Natural killer cell (primary cell): ENCODE measurements at regions of chr3 and their contacts with region 1.

Region 1: GRCh38 chr3:66220602-66221377 is at the start of gene SLC25A26:
- DNase-seq: peak; percentile 91 to 99
- ATAC-seq: peak; percentile 94 to 97 (median 95)
- H3K4me3 ChIP-seq: peak within 1 kb of the TSS; percentile 83
- H3K4me3 Mint-ChIP-seq: peak within 1 kb of the TSS; percentile 98
- H3K27ac ChIP-seq: peak within 1 kb of the TSS; percentile 70
- H3K27ac Mint-ChIP-seq: peak within 1 kb of the TSS; percentile 90 to 94
- H3K4me1 ChIP-seq: peaks cover 3% of the 10 kb centered on the region
- H3K4me1 Mint-ChIP-seq: peaks cover 19 to 21% of the 10 kb centered on the region in 2 donors
- H3K27me3 ChIP-seq: no peaks in the 10 kb centered on the region
- H3K27me3 Mint-ChIP-seq: peaks cover 5 to 16% of the 10 kb centered on the region in 2 donors
- CTCF ChIP-seq: no peak
- total RNA-seq, gene SLC25A26: 18.4 to 23.9 (median 23.3) TPM

Region 2: GRCh38 chr3:66372681-66373350 is 152.0 kb after region 1 on chr3:
- intact Hi-C with region 1: no loop called
- DNase-seq: peak; percentile 46 to 72
- ATAC-seq: peak; percentile 76 to 99 (median 96)
- H3K4me3 ChIP-seq: no peak overlapping the region
- H3K4me3 Mint-ChIP-seq: no peak overlapping the region
- H3K27ac ChIP-seq: no peak overlapping the region
- H3K27ac Mint-ChIP-seq: peak overlapping the region in 1 of 2 donors; percentile 19
- H3K4me1 ChIP-seq: peaks cover 24% of the 10 kb centered on the region
- H3K4me1 Mint-ChIP-seq: peaks cover 17 to 24% of the 10 kb centered on the region in 2 donors
- H3K27me3 ChIP-seq: no peaks in the 10 kb centered on the region
- H3K27me3 Mint-ChIP-seq: no peaks in the 10 kb centered on the region
- CTCF ChIP-seq: peak; percentile 62

Region 3: DNA sequence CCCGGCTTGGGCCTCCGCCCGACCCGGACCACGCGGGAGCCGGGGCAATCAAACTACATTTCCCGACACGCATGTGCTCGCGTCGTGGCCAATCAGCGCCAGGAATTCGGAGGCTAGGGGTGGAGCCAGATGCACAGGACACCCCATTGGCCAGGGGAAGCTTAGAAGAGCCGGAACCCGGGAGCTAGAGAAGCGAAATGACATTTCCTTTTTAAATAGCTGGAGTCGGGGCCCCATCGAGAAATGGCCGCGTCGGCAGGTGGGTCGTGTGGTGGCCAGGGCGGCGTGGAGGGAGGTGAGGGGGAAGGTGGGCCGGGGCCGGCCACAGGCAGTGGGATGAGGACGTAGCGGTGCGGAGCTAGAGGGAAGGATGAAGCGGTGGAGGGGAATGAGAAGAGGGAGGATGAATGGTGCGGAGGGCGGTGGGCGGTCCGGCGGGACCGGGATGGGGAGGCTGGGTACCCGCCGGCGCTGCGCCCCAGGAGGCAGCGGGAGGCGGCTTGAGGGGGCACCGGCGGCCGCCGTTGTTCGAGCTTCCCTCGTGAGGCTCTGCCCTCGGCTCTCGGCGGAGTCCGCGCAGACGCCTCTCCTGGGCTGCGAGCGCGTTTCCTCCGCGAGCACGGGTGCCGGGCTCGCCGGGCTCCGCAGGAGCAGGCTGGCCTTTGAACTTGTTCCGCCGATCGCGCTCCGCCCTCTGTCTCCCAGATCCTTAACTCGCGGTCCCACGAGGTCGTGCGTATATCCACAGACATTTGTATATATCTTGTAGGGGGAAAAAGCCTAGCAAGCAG is 777.5 kb after region 1 on chr3 and contains the start of gene KBTBD8:
- intact Hi-C with region 1: loop called (anchors 5 kb)
- DNase-seq: peak; percentile 87 to 99
- ATAC-seq: peak; percentile 93 to 98 (median 95)
- H3K4me3 ChIP-seq: peak within 1 kb of the TSS; percentile 80
- H3K4me3 Mint-ChIP-seq: peak within 1 kb of the TSS; percentile 97
- H3K27ac ChIP-seq: peak within 1 kb of the TSS; percentile 71
- H3K27ac Mint-ChIP-seq: peak within 1 kb of the TSS; percentile 84 to 89
- H3K4me1 ChIP-seq: peaks cover 12% of the 10 kb centered on the region
- H3K4me1 Mint-ChIP-seq: peaks cover 17 to 23% of the 10 kb centered on the region in 2 donors
- H3K27me3 ChIP-seq: peaks cover 6% of the 10 kb centered on the region
- H3K27me3 Mint-ChIP-seq: peaks cover 10 to 17% of the 10 kb centered on the region in 2 donors
- CTCF ChIP-seq: no peak
- total RNA-seq, gene KBTBD8: 8.6 to 11.8 (median 10.8) TPM